ENCODE measurements at regions of chr9 and their contacts with region 1.

Region 1: GRCh38 chr9:121650217-121651007 is 1.0 kb upstream of the DAB2IP start:
- DNase-seq: peak; percentile 91
- H3K4me3 ChIP-seq: no peak overlapping the region
- H3K27ac ChIP-seq: peak overlapping the region in 1 of 2 experiments; percentile 94; a peak in 3 of 4 replicates
- H3K4me1 ChIP-seq: peaks cover 12 to 74% of the 10 kb centered on the region in 2 experiments
- H3K27me3 ChIP-seq: no peaks in the 10 kb centered on the region
- CTCF ChIP-seq: no peak
- EP300 ChIP-seq: peak; percentile 40 to 53; a peak in 2 of 4 replicates
- RAD21 ChIP-seq: peak; percentile 23; the same call in 1 of the 2 replicates

Region 2: GRCh38 chr9:121483049-121483448 is 167.4 kb before region 1 on chr9:
- CTCF ChIA-PET with region 1: no interaction called
- POLR2A ChIA-PET with region 1: no interaction called
- DNase-seq: no peak
- H3K4me3 ChIP-seq: no peak overlapping the region
- H3K27ac ChIP-seq: peak overlapping the region in 1 of 2 experiments; percentile 24; a peak in 1 of 4 replicates
- H3K4me1 ChIP-seq: peaks cover 0 to 18% of the 10 kb centered on the region in 2 experiments; a peak in 1 of 4 replicates
- H3K27me3 ChIP-seq: no peaks in the 10 kb centered on the region
- CTCF ChIP-seq: no peak
- EP300 ChIP-seq: no peak
- RAD21 ChIP-seq: no peak

Region 3: DNA sequence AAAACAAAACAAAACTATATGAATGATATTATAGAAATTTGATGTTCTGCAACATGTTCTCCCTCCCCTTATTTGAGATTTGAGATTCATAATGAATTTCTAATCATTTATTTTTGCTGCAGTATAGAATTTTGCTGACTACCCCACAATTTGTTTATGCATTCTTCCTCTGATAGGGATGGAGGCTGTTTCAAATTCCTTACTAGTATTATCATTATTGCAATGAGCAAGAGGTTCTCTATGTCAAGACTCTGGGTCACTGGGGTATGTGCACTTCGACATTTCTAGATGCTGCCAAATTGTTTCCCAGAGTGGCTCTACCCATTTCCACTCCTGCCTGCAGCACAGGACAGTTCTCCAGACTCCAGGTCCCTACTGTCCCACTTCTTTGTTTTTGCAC is 53.9 kb before region 1 on chr9:
- CTCF ChIA-PET with region 1: no interaction called
- POLR2A ChIA-PET with region 1: no interaction called
- DNase-seq: no peak
- H3K4me3 ChIP-seq: no peak overlapping the region
- H3K27ac ChIP-seq: no peak overlapping the region
- H3K4me1 ChIP-seq: peaks cover 0 to 19% of the 10 kb centered on the region in 2 experiments; a peak in 1 of 4 replicates
- H3K27me3 ChIP-seq: no peaks in the 10 kb centered on the region
- CTCF ChIP-seq: no peak
- EP300 ChIP-seq: no peak
- RAD21 ChIP-seq: no peak

Region 4: GRCh38 chr9:121640076-121640475 is 10.3 kb before region 1 on chr9:
- CTCF ChIA-PET with region 1: interaction called, 13 read pairs
- POLR2A ChIA-PET with region 1: interaction called, 5 read pairs
- DNase-seq: peak; percentile 75
- H3K4me3 ChIP-seq: no peak overlapping the region
- H3K27ac ChIP-seq: no peak overlapping the region; a peak in 1 of 4 replicates
- H3K4me1 ChIP-seq: peaks cover 8 to 48% of the 10 kb centered on the region in 2 experiments; a peak in 3 of 4 replicates
- H3K27me3 ChIP-seq: no peaks in the 10 kb centered on the region
- CTCF ChIP-seq: peak; percentile 64
- EP300 ChIP-seq: no peak
- RAD21 ChIP-seq: peak; percentile 66

Measured in SK-N-SH (cell line).